Upper lobe of right lung (tissue), 1 donor: ENCODE measurements at regions of chr3 and their contacts with region 1.

Region 1: GRCh38 chr3:149114458-149114857 is 15.0 kb upstream of the HPS3 start:
- DNase-seq: no peak
- ATAC-seq: no peak
- H3K4me3 ChIP-seq: no peak overlapping the region
- H3K27ac ChIP-seq: no peak overlapping the region
- H3K4me1 ChIP-seq: no peaks in the 10 kb centered on the region
- H3K27me3 ChIP-seq: no peaks in the 10 kb centered on the region
- CTCF ChIP-seq: no peak

Region 2: GRCh38 chr3:149273096-149273751 is 158.8 kb after region 1 on chr3:
- intact Hi-C with region 1: loop called (anchors 5 kb)
- DNase-seq: no peak
- ATAC-seq: peak; percentile 96
- H3K4me3 ChIP-seq: no peak overlapping the region
- H3K27ac ChIP-seq: no peak overlapping the region
- H3K4me1 ChIP-seq: peaks cover 4% of the 10 kb centered on the region
- H3K27me3 ChIP-seq: no peaks in the 10 kb centered on the region
- CTCF ChIP-seq: peak; percentile 92

Region 3: GRCh38 chr3:149480325-149481017 is 366.0 kb after region 1 on chr3:
- intact Hi-C with region 1: loop called (anchors 10 kb)
- DNase-seq: peak; percentile 86
- ATAC-seq: peak; percentile 99
- H3K4me3 ChIP-seq: no peak overlapping the region
- H3K27ac ChIP-seq: peak overlapping the region; percentile 69
- H3K4me1 ChIP-seq: peaks cover 22% of the 10 kb centered on the region
- H3K27me3 ChIP-seq: no peaks in the 10 kb centered on the region
- CTCF ChIP-seq: peak; percentile 90